GM12878 (cell line): ENCODE measurements at regions of chr4 and their contacts with region 1.

Region 1: DNA sequence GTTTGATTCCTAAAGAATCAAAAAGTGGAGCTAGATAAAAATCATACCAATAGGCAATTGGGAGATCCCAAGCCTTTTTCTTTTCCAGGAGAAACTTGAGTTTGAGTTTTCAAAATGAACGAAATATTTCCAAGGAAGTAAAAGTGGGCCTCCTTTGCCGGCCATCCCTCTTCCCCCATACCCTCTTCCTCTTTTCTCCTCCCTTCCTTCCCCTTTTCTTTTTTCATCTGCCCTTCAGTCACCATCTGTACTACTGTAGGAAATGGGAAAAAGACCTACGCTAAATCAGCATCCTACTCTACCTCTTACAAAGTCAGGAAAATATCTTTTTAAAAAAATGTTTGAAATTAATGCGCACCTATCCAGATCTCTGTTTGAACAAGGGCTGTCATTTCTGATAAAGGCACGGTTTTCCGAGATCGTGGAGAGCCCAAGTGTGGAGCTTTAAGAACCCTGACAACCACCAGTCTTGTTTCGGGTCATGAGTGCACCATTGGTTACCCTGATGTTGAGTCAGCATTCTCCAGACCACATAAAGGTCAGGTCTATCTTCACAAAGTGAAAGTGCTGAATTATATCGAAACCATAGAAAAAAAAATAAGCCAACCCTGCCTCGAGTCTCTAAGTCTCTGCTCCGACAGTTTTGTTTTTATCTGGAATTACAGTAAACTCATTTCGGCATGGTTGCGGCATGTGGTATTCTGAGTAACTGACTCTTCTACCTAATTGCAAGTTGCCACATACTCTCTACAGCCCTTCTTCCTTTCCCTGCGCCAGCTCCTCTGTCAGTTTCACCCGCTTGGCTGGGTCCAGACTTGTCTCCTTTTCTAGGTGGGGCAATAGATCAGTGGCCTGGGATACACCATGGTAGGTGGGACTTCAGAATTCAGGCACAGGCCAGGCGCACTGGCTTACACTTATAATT is 140.2 kb upstream of the KLF3 start:
- DNase-seq: peak; percentile 82
- ATAC-seq: peak; percentile 99
- H3K4me3 ChIP-seq: peak overlapping the region; percentile 35; the same call in 1 of the 2 replicates
- H3K27ac ChIP-seq: peak overlapping the region; percentile 57
- H3K4me1 ChIP-seq: peaks cover 14% of the 10 kb centered on the region
- H3K27me3 ChIP-seq: no peaks in the 10 kb centered on the region
- CTCF ChIP-seq: no peak
- EP300 ChIP-seq: peak; percentile 46 to 60; a peak in 3 of 4 replicates
- POLR2A ChIP-seq: no peak
- RAD21 ChIP-seq: peak; percentile 15

Region 2: DNA sequence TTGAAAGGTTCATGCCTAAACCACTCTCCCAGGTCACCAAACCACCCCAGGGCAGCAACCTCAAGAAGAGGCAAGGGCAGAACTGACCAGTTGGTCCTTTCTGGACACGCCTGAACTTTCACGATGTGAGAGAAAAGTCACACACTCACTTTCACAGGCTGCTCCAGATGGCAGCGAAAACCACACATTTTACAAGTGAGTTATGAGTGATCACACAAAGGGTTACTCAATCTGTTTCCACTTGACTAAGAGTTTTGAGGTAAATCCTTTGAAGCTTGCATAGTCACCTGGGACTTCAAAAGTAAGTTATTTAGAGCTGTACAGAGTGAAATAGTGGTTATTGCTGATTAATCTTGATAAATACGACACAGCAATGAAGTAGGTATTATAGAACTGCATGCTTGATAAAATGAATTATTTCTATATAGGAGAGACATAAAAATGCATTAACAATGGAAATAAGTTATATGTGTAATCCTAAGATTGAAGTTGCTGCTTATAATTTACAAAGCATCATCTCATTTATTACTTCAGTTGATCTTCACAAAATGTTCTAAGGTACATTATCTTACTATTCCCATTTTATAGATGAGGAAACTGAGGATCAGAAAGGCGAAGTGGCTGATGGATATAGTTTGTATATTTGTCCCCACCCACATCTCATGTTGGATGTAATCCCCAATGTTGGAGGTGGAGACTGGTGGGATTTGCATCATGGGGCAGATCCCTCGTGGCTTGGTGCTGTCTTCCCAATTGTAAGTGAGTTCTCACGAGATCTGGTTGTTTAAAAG is 37.2 kb after region 1 on chr4:
- CTCF ChIA-PET with region 1: no interaction called
- POLR2A ChIA-PET with region 1: no interaction called
- RAD21 ChIA-PET with region 1: no interaction called
- SMC1A ChIA-PET with region 1: no interaction called
- in situ Hi-C with region 1: no loop called
- intact Hi-C with region 1: loop called (anchors 2 kb)
- DNase-seq: peak; percentile 54
- ATAC-seq: peak; percentile 95
- H3K4me3 ChIP-seq: no peak overlapping the region
- H3K27ac ChIP-seq: no peak overlapping the region
- H3K4me1 ChIP-seq: peaks cover 21% of the 10 kb centered on the region
- H3K27me3 ChIP-seq: no peaks in the 10 kb centered on the region; a peak in 1 of 4 replicates
- CTCF ChIP-seq: no peak
- EP300 ChIP-seq: peak; percentile 24 to 66; a peak in 2 of 4 replicates
- POLR2A ChIP-seq: no peak
- RAD21 ChIP-seq: peak; percentile 33; the same call in 1 of the 2 replicates

Region 3: GRCh38 chr4:38663801-38664705 is 140.3 kb after region 1 on chr4 and contains the start of gene KLF3:
- CTCF ChIA-PET with region 1: no interaction called
- POLR2A ChIA-PET with region 1: no interaction called
- RAD21 ChIA-PET with region 1: no interaction called
- SMC1A ChIA-PET with region 1: no interaction called
- in situ Hi-C with region 1: no loop called
- intact Hi-C with region 1: loop called (anchors 5 kb)
- DNase-seq: no peak
- ATAC-seq: peak; percentile 73
- H3K4me3 ChIP-seq: peak within 1 kb of the TSS; percentile 78
- H3K27ac ChIP-seq: peak within 1 kb of the TSS; percentile 68
- H3K4me1 ChIP-seq: peaks cover 12% of the 10 kb centered on the region
- H3K27me3 ChIP-seq: peaks cover 0 to 4% of the 10 kb centered on the region in 2 experiments; a peak in 1 of 4 replicates
- CTCF ChIP-seq: no peak
- EP300 ChIP-seq: no peak
- POLR2A ChIP-seq: peak; percentile 67
- RAD21 ChIP-seq: no peak
- polyA plus RNA-seq, gene KLF3: 1.4 to 1.5 TPM